ENCODE measurements at regions of chr9 and their contacts with region 1.

Region 1: DNA sequence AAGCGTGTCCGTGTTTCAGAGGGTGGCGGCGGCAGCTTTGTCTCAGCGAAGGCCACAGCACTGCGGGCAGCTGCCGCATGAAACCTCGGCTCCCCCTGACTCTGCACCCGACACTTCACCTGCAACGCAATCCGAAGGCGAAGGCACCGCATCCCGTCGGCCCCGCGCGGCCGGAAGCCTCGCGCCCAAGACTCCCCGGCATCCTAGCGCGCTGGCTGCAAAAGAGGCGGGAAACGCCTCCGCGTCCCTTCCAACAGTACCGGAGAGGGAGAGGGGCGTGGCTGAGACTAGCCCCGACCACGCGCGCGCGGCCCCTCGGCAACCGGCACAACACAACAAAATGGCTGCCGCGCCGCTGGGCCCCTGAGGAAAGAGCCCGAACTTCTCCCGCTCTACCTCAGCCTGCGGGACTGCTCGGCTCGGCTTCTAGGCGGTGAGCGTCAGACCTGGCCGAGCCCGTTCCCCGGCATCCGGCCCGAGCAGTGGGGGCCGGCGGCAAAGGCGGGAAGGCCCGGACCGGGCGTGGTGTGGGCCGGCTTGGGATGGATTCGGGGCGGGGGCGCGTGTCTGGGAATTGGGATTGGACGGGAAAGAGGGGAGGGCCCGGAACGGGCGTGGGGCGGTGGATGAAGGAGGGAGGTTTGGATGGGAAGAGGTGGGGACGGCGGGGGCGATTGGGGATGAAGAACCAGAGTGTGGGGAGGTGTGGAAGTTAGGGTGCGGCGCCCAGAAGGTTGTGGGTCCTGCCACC is at the start of gene CNTRL:
- DNase-seq: peak; percentile 73 to 91
- ATAC-seq: peak; percentile 83 to 88 (median 88)
- H3K4me3 ChIP-seq: peak within 1 kb of the TSS; percentile 84
- H3K4me3 Mint-ChIP-seq: peak within 1 kb of the TSS; percentile 100
- H3K27ac ChIP-seq: peak within 1 kb of the TSS; percentile 77
- H3K27ac Mint-ChIP-seq: peak within 1 kb of the TSS; percentile 94 to 95
- H3K4me1 ChIP-seq: peaks cover 20% of the 10 kb centered on the region
- H3K4me1 Mint-ChIP-seq: peaks cover 44 to 46% of the 10 kb centered on the region in 2 donors
- H3K27me3 ChIP-seq: no peaks in the 10 kb centered on the region
- H3K27me3 Mint-ChIP-seq: no peaks in the 10 kb centered on the region
- CTCF ChIP-seq: no peak
- total RNA-seq, gene CNTRL: 59.1 to 74.3 (median 60.0) TPM

Region 2: DNA sequence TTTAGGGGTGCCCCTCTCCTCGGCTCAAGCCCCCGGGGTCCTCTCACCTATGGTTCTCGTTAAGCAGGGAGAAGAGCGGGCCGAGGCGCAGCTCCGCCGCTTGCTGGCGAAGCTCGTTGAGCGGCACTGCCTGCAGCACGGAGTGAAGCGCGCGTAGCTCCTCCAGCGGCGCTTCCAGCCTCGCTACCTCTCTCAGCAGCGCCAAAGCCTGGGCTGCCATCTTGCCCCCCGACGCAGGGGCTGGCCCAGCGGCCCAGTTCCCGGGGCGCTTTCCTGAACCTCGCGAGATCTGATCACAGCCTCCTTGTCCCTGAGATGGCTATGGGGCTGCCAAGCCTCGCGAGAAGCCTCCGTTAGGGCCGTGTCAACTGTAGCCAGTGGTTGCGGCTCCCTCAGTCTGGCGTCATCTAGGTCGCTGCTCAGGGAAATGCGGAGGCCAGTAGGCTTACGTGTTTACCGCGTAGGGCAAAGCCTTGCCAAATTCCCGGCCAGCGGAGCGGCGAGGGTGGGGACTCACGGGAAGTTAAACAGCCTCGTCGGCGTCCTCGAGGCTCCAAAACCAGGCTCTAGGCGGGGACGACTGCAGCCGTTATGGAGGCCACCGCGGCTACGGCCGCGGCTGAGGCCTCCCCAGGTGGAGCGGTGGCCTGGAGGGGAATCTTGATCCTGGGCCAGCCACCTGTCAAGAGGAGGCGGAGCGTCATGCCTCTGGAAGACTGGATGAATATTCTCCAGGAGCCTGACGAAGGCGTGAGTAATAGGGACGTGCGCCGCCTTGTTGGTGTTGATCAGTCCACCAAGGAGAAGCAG is 231.9 kb before region 1 on chr9 and contains the start of gene PSMD5:
- intact Hi-C with region 1: loop called (anchors 2 kb)
- DNase-seq: peak; percentile 92 to 98
- ATAC-seq: peak; percentile 95 to 99 (median 97)
- H3K4me3 ChIP-seq: peak within 1 kb of the TSS; percentile 85
- H3K4me3 Mint-ChIP-seq: peak within 1 kb of the TSS; percentile 99
- H3K27ac ChIP-seq: peak within 1 kb of the TSS; percentile 92
- H3K27ac Mint-ChIP-seq: peak within 1 kb of the TSS; percentile 98 to 99
- H3K4me1 ChIP-seq: peaks cover 28% of the 10 kb centered on the region
- H3K4me1 Mint-ChIP-seq: peaks cover 57 to 58% of the 10 kb centered on the region in 2 donors
- H3K27me3 ChIP-seq: no peaks in the 10 kb centered on the region
- H3K27me3 Mint-ChIP-seq: no peaks in the 10 kb centered on the region
- CTCF ChIP-seq: no peak
- total RNA-seq, gene PSMD5: 24.6 to 41.2 (median 37.1) TPM

Region 3: GRCh38 chr9:121121582-121122087 is 46.8 kb after region 1 on chr9:
- intact Hi-C with region 1: loop called (anchors 2 kb)
- DNase-seq: peak; percentile 94 to 97
- ATAC-seq: peak; percentile 98 to 100 (median 100)
- H3K4me3 ChIP-seq: peak overlapping the region; percentile 46
- H3K4me3 Mint-ChIP-seq: peak overlapping the region; percentile 98
- H3K27ac ChIP-seq: peak overlapping the region; percentile 65
- H3K27ac Mint-ChIP-seq: peak overlapping the region; percentile 90 to 98
- H3K4me1 ChIP-seq: peaks cover 3% of the 10 kb centered on the region
- H3K4me1 Mint-ChIP-seq: peaks cover 36 to 40% of the 10 kb centered on the region in 2 donors
- H3K27me3 ChIP-seq: no peaks in the 10 kb centered on the region
- H3K27me3 Mint-ChIP-seq: no peaks in the 10 kb centered on the region
- CTCF ChIP-seq: no peak

Region 4: GRCh38 chr9:121150188-121150587 is 75.4 kb after region 1 on chr9:
- intact Hi-C with region 1: no loop called
- DNase-seq: no peak
- ATAC-seq: no peak
- H3K4me3 ChIP-seq: no peak overlapping the region
- H3K4me3 Mint-ChIP-seq: no peak overlapping the region
- H3K27ac ChIP-seq: no peak overlapping the region
- H3K27ac Mint-ChIP-seq: no peak overlapping the region
- H3K4me1 ChIP-seq: no peaks in the 10 kb centered on the region
- H3K4me1 Mint-ChIP-seq: peaks cover 16 to 24% of the 10 kb centered on the region in 2 donors
- H3K27me3 ChIP-seq: no peaks in the 10 kb centered on the region
- H3K27me3 Mint-ChIP-seq: no peaks in the 10 kb centered on the region
- CTCF ChIP-seq: no peak

Region 5: GRCh38 chr9:121201738-121202533 is 127.1 kb after region 1 on chr9 and contains the start of gene RAB14:
- intact Hi-C with region 1: loop called (anchors 2 kb)
- DNase-seq: peak; percentile 100
- ATAC-seq: peak; percentile 88 to 96 (median 89)
- H3K4me3 ChIP-seq: peak within 1 kb of the TSS; percentile 96
- H3K4me3 Mint-ChIP-seq: peak within 1 kb of the TSS; percentile 94
- H3K27ac ChIP-seq: peak within 1 kb of the TSS; percentile 92
- H3K27ac Mint-ChIP-seq: peak within 1 kb of the TSS; percentile 89 to 94
- H3K4me1 ChIP-seq: peaks cover 19% of the 10 kb centered on the region
- H3K4me1 Mint-ChIP-seq: peaks cover 47 to 50% of the 10 kb centered on the region in 2 donors
- H3K27me3 ChIP-seq: no peaks in the 10 kb centered on the region
- H3K27me3 Mint-ChIP-seq: no peaks in the 10 kb centered on the region
- CTCF ChIP-seq: peak; percentile 42
- total RNA-seq, gene RAB14: 46.2 to 67.6 (median 57.3) TPM

Measured in natural killer cell (primary cell).